Colonic mucosa (tissue), 4 donors: ENCODE measurements at regions of chr1 and their contacts with region 1.

Region 1: GRCh38 chr1:179121159-179121938 is 39.5 kb downstream of the TOR3A start:
- DNase-seq: peak; percentile 66
- H3K4me3 ChIP-seq: no peak overlapping the region
- H3K27ac ChIP-seq: no peak overlapping the region
- H3K4me1 ChIP-seq: no peaks in the 10 kb centered on the region
- H3K27me3 ChIP-seq: no peaks in the 10 kb centered on the region
- CTCF ChIP-seq: peak; percentile 49

Region 2: DNA sequence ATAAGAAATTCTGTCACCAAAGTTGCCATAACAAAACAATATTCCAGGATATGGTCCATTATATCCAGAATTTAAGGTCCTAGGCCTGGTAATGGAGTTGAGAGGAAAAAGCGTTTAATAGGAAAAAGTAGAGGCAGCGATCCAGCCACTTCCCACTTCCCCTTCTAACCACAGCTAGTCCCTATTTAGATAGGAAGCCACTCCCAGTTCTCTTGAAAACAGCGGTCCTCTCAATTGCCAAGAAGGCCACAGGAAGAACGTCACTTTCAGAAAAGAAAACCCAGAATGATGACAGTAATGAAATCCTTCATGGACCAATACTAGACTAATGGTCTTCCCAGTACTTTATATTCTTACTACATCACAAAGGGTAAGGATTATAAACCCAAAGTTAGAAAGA is 69.5 kb after region 1 on chr1:
- intact Hi-C with region 1: loop called (anchors 5 kb)
- DNase-seq: no peak
- H3K4me3 ChIP-seq: no peak overlapping the region
- H3K27ac ChIP-seq: no peak overlapping the region
- H3K4me1 ChIP-seq: no peaks in the 10 kb centered on the region
- H3K27me3 ChIP-seq: no peaks in the 10 kb centered on the region
- CTCF ChIP-seq: no peak

Region 3: GRCh38 chr1:179305450-179305849 is 184.1 kb after region 1 on chr1:
- intact Hi-C with region 1: loop called (anchors 10 kb)
- DNase-seq: no peak
- H3K4me3 ChIP-seq: no peak overlapping the region
- H3K27ac ChIP-seq: no peak overlapping the region
- H3K4me1 ChIP-seq: no peaks in the 10 kb centered on the region
- H3K27me3 ChIP-seq: no peaks in the 10 kb centered on the region
- CTCF ChIP-seq: no peak